Activated CD4-positive, alpha-beta T cell treated with anti-CD3 and anti-CD28 coated beads, Interleukin-2, amount 10 ng/mL, durations not matched to agents 7 days and 5 days (primary cell): ENCODE measurements at regions of chr2 and their contacts with region 1.

Region 1: GRCh38 chr2:216171011-216171410 is 61.9 kb downstream of the XRCC5 start:
- DNase-seq: no peak
- H3K4me3 Mint-ChIP-seq: no peak overlapping the region
- H3K27ac Mint-ChIP-seq: no peak overlapping the region
- H3K4me1 Mint-ChIP-seq: peaks cover 13% of the 10 kb centered on the region
- H3K27me3 Mint-ChIP-seq: no peaks in the 10 kb centered on the region

Region 2: DNA sequence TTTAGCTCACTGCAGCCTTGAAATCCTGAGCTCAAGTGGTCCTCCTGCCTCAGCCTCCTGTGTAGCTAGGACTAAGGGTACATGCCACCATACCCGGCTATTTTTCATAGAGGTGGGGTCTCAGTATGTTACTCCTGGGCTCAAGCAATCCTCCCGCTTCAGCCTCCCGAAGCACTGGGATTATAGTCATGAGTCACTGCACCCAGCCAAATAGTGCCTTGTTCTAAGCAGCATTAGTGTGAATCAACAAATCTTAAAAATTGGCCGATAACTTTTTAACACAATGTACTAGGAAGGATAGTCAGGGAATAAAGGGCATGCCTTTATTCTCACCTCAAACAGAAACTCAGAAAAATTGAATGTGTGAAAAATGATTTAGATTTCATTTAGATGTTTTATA is 10.2 kb before region 1 on chr2:
- CTCF ChIA-PET with region 1: interaction called, 15 read pairs
- POLR2A ChIA-PET with region 1: no interaction called
- DNase-seq: no peak
- H3K4me3 Mint-ChIP-seq: no peak overlapping the region
- H3K27ac Mint-ChIP-seq: peak overlapping the region; percentile 54
- H3K4me1 Mint-ChIP-seq: peaks cover 26% of the 10 kb centered on the region
- H3K27me3 Mint-ChIP-seq: no peaks in the 10 kb centered on the region